HepG2 (cell line): ENCODE measurements at regions of chr19 and their contacts with region 1.

Region 1: DNA sequence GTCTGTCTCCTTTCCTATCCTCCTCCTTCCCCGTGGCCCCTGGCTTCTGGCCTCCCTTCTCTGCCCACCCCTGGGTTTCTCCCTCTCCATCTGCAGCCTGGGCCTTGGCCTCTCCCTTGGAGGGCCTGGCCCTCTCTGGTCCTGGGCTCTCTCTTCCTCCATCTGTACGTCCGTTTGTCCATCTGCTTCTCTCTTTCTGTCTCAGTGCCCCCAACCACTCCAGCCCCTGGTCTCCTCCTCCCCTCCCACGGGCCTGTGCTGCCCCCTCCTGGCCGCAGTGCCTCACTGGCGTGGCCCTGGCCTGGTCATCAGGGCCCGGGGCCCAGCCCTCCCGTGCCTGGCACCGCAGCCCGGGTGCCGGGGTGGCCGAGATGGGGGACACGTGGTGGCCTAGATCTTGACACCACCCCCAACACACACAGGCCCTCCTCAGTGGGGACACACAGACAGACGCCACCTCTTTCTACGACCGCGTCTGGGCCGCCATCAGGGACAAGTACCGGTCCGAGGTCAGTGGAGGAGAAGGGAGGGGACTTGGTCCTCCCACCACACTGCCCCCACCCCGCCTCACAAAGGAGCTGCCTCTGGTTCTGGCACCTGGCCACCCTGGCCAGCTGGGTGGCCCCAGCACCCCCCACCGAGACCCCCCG is 11.3 kb downstream of the PRKCSH start:
- DNase-seq: no peak
- ATAC-seq: peak; percentile 86
- H3K4me3 ChIP-seq: no peak overlapping the region
- H3K27ac ChIP-seq: no peak overlapping the region
- H3K4me1 ChIP-seq: no peaks in the 10 kb centered on the region
- H3K27me3 ChIP-seq: no peaks in the 10 kb centered on the region
- CTCF ChIP-seq: peak; percentile 90
- EP300 ChIP-seq: no peak
- POLR2A ChIP-seq: no peak
- RAD21 ChIP-seq: peak; percentile 91

Region 2: DNA sequence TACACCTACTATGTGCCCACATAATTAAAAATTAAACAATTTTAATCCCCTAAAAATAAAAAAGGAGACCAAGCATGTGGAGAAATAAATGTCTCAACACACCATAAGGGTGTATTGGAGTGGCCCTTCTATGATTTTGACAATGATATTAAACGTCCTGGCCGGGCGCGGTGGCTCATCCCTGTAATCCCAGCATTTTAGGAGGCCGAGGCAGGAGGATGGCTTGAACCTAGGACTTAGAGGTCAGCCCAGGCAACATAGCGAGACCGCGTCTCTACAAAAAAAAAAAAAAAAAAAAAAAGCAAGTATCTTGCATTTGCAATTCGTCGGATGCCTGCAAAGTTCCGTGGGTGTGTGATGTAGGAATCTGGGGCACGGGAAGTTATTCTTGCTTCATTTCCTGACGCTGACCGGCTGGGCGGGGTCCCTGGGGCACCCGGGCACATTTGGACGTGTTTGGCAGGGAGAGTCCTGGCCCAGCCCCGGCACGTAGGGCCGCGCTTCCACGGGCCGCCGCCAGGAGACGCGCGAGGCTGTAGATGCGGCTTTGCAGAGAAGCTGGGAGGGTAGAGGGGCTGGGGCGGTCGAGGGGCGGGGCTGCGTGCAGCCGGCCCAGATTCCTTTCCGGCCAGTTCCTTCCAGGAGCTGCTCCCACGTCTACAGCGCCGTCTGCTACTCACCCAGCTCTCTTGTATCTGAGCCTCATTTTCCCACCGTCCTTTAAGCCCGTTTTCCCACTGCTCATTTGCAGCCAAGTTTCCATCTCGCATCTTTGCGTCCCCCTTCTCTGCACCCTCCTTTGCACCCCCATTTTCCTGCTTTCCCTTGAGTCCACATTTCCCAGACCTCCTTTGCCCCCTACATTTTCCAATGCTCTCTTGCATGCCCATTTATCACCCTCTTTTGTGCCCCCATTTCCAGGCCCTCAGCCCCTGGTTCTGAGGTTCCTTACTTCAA is 153.1 kb before region 1 on chr19:
- CTCF ChIA-PET with region 1: interaction called, 10 read pairs
- POLR2A ChIA-PET with region 1: no interaction called
- in situ Hi-C with region 1: loop called (anchors 10 kb)
- intact Hi-C with region 1: loop called (anchors 10 kb)
- DNase-seq: peak; percentile 78
- ATAC-seq: peak; percentile 96
- H3K4me3 ChIP-seq: peak overlapping the region in 1 of 3 experiments; percentile 56; a peak in 2 of 6 replicates
- H3K27ac ChIP-seq: no peak overlapping the region
- H3K4me1 ChIP-seq: peaks cover 43% of the 10 kb centered on the region
- H3K27me3 ChIP-seq: peaks cover 3 to 13% of the 10 kb centered on the region in 2 experiments; a peak in 4 of 5 replicates
- CTCF ChIP-seq: peak; percentile 98
- EP300 ChIP-seq: 0 out of 4 replicates have a peak, but pooled peaks of 1 of the 2 experiments have one; percentile 3
- POLR2A ChIP-seq: no peak
- RAD21 ChIP-seq: peak; percentile 96

Region 3: GRCh38 chr19:11465613-11466012 is 18.8 kb after region 1 on chr19:
- CTCF ChIA-PET with region 1: no interaction called
- POLR2A ChIA-PET with region 1: no interaction called
- in situ Hi-C with region 1: no loop called
- intact Hi-C with region 1: no loop called
- DNase-seq: no peak
- ATAC-seq: no peak
- H3K4me3 ChIP-seq: no peak overlapping the region
- H3K27ac ChIP-seq: no peak overlapping the region
- H3K4me1 ChIP-seq: no peaks in the 10 kb centered on the region
- H3K27me3 ChIP-seq: no peaks in the 10 kb centered on the region; a peak in 1 of 5 replicates
- CTCF ChIP-seq: no peak
- EP300 ChIP-seq: no peak
- POLR2A ChIP-seq: no peak
- RAD21 ChIP-seq: no peak

Region 4: DNA sequence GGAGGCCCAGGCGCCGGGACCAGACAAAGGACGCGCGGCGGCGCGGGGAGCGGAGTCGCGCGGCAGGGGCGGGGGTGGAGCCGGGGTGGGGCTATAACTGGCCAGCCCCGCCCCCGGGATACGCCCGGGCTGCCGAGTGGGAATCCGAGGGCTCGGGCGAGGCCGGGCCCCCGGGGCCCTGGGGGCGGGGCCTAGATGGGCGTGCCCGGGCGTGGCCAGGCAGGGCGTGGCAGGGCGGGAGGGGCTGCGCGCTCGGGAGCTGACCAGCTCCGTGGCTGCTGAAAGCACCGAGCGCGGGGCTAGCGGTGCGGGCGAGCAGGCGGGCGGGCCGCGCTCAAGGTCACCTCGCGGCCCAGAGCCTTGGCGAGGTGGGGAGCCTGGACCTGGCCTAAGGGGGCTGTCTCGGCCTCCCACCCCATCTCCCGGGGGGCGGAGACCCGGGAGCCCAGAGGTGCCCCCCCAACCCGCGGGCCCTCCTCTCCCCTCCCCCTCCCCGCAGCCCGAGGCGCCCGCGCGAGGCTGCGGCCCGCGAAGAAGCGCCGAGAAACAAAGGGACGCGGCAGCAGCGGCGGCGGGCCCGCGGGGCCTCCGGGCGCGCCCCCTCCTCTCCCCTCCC is 32.8 kb after region 1 on chr19:
- CTCF ChIA-PET with region 1: no interaction called
- POLR2A ChIA-PET with region 1: no interaction called
- in situ Hi-C with region 1: no loop called
- intact Hi-C with region 1: no loop called
- DNase-seq: peak; percentile 41
- ATAC-seq: peak; percentile 25
- H3K4me3 ChIP-seq: peak overlapping the region; percentile 7 to 37 (median 20); a peak in 3 of 6 replicates
- H3K27ac ChIP-seq: no peak overlapping the region
- H3K4me1 ChIP-seq: peaks cover 17% of the 10 kb centered on the region
- H3K27me3 ChIP-seq: peaks cover 5 to 32% of the 10 kb centered on the region in 2 experiments; a peak in 4 of 5 replicates
- CTCF ChIP-seq: no peak
- EP300 ChIP-seq: no peak
- POLR2A ChIP-seq: no peak
- RAD21 ChIP-seq: no peak

Region 5: GRCh38 chr19:11496391-11497163 is 49.8 kb after region 1 on chr19:
- CTCF ChIA-PET with region 1: no interaction called
- POLR2A ChIA-PET with region 1: no interaction called
- in situ Hi-C with region 1: no loop called
- intact Hi-C with region 1: no loop called
- DNase-seq: peak; percentile 62
- ATAC-seq: peak; percentile 83
- H3K4me3 ChIP-seq: no peak overlapping the region
- H3K27ac ChIP-seq: no peak overlapping the region
- H3K4me1 ChIP-seq: peaks cover 1% of the 10 kb centered on the region
- H3K27me3 ChIP-seq: no peaks in the 10 kb centered on the region; a peak in 1 of 5 replicates
- CTCF ChIP-seq: peak; percentile 65
- EP300 ChIP-seq: no peak
- POLR2A ChIP-seq: no peak
- RAD21 ChIP-seq: 0 out of 2 replicates have a peak, but pooled peaks have one; percentile 30